Activated CD8-positive, alpha-beta T cell treated with anti-CD3 and anti-CD28 coated beads, Interleukin-2, amount 10 ng/mL, durations not matched to agents 7 days and 5 days (primary cell): ENCODE measurements at regions of chr2 and their contacts with region 1.

Region 1: GRCh38 chr2:100381240-100381639 is 36.2 kb downstream of the CHST10 start:
- DNase-seq: peak; percentile 84
- ATAC-seq: peak; percentile 60
- H3K4me3 Mint-ChIP-seq: no peak overlapping the region
- H3K27ac Mint-ChIP-seq: no peak overlapping the region
- H3K4me1 Mint-ChIP-seq: peaks cover 3% of the 10 kb centered on the region
- H3K27me3 Mint-ChIP-seq: no peaks in the 10 kb centered on the region

Region 2: DNA sequence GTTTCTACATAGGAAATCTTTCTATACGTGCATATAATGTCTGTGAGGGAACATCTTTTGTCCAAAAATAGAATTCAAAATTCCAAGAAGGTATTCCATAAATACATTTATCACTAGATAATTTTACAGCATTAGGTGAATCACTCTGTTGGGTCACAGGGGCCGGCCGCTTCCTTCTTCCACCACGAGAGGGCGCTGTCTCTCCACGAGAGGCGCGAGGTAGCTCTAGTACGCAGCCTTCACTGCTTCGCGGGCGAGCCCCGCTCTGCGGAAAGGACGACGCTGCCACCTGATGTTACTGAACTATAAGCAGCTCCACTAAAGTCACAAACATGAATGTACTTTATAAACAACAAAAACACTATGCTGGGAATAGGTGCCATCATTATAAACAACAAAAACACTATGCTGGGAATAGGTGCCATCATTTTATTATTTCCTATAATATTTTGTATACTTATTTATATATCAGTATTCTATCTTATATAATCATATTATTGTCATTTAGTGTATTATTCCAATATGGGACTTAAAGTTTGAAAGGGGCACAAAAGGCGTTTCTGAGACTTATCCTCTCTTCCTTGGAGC is 822.1 kb before region 1 on chr2:
- CTCF ChIA-PET with region 1: interaction called, 12 read pairs
- POLR2A ChIA-PET with region 1: no interaction called
- DNase-seq: peak; percentile 88
- ATAC-seq: peak; percentile 98
- H3K4me3 Mint-ChIP-seq: no peak overlapping the region
- H3K27ac Mint-ChIP-seq: no peak overlapping the region
- H3K4me1 Mint-ChIP-seq: peaks cover 2% of the 10 kb centered on the region
- H3K27me3 Mint-ChIP-seq: peaks cover 11% of the 10 kb centered on the region

Region 3: DNA sequence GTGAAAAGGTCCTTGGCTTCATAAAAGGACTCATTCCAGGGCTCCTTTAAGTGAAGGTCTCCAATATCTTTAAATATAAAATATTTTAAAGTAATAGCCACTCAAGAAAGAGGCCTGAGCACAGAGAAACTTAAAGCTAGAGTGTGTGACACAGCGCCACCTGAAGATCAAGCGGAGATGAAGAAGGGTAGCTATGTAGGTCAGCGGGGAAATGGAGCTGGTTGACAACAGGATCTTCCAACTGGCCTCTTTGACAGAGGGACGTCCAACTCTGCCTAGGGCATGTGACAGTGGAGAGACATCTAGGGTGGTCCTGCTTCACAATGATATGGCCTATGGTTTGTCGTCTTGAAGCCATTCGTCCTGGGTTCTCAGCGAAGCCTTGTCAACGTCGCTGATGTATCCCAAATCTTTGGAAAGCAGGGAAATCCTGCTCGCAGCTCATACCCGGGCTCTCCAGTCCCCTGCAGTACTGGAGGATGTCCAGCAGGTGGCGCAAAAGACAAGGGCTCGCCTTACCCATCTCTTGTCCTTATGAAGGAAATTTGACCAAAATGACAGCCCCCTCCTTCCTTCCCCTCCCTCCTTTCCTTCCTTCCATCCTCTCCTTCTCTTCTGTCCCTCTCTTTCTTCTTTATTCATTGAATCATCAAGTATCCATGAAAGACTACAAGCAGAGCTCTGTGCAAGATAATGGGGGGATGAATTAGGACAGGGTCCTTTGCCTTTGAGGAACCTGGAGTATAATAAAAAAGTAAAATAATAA is 118.5 kb before region 1 on chr2:
- CTCF ChIA-PET with region 1: interaction called, 227 read pairs
- POLR2A ChIA-PET with region 1: interaction called, 4 read pairs
- DNase-seq: peak; percentile 72
- ATAC-seq: peak; percentile 75
- H3K4me3 Mint-ChIP-seq: no peak overlapping the region
- H3K27ac Mint-ChIP-seq: no peak overlapping the region
- H3K4me1 Mint-ChIP-seq: peaks cover 2% of the 10 kb centered on the region
- H3K27me3 Mint-ChIP-seq: no peaks in the 10 kb centered on the region

Region 4: DNA sequence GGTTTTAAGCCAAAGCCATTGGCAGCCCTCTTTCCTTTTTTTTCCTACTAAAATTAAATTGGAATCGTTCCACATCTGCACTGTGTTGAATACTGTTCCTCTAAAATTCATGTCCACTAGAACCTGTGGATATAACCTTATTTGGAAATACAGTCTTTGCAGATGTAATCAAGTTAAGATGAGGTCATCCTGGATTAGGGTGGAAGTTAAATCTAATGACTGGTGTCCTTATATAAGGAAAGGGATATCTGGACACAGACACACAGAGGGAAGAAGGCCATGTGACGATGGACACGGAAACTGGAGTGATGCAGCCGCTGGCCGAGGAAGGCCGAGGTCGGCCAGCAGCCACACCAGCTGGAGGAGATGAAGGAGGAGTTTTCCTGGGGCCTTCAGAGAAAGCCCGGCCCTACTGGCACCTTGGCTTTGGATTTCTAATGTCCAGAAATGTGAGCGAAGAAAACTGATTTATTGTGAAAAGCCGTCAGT is 108.4 kb before region 1 on chr2:
- CTCF ChIA-PET with region 1: interaction called, 11 read pairs
- POLR2A ChIA-PET with region 1: no interaction called
- DNase-seq: no peak
- ATAC-seq: no peak
- H3K4me3 Mint-ChIP-seq: no peak overlapping the region
- H3K27ac Mint-ChIP-seq: no peak overlapping the region
- H3K4me1 Mint-ChIP-seq: peaks cover 11% of the 10 kb centered on the region
- H3K27me3 Mint-ChIP-seq: peaks cover 2% of the 10 kb centered on the region

Region 5: GRCh38 chr2:100291120-100291970 is 89.9 kb before region 1 on chr2:
- CTCF ChIA-PET with region 1: interaction called, 12 read pairs
- POLR2A ChIA-PET with region 1: no interaction called
- DNase-seq: peak; percentile 84
- ATAC-seq: peak; percentile 96
- H3K4me3 Mint-ChIP-seq: no peak overlapping the region
- H3K27ac Mint-ChIP-seq: no peak overlapping the region
- H3K4me1 Mint-ChIP-seq: peaks cover 11% of the 10 kb centered on the region
- H3K27me3 Mint-ChIP-seq: peaks cover 20% of the 10 kb centered on the region

Region 6: DNA sequence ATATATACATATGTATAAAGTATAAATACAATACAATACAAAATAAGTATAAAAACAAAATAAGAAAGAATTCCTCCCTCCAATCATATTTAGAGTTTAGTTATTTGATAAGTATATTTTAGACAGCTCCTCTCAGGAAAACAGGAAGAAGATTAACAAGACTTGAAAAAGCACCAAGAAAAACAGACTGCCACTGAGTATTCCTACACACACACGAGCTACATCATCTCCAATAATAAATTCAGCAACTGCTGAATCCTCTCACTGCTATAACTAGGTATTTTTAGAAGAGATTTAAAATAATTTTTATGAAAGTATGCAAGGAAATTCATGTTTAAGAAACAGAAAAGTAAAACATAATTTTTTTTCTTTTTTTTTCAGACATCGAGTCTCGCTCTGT is 71.9 kb before region 1 on chr2:
- CTCF ChIA-PET with region 1: interaction called, 10 read pairs
- POLR2A ChIA-PET with region 1: no interaction called
- DNase-seq: no peak
- ATAC-seq: no peak
- H3K4me3 Mint-ChIP-seq: no peak overlapping the region
- H3K27ac Mint-ChIP-seq: no peak overlapping the region
- H3K4me1 Mint-ChIP-seq: no peaks in the 10 kb centered on the region
- H3K27me3 Mint-ChIP-seq: peaks cover 25% of the 10 kb centered on the region

Region 7: GRCh38 chr2:100365434-100365833 is 15.8 kb before region 1 on chr2:
- CTCF ChIA-PET with region 1: interaction called, 19 read pairs
- POLR2A ChIA-PET with region 1: no interaction called
- DNase-seq: no peak
- ATAC-seq: no peak
- H3K4me3 Mint-ChIP-seq: no peak overlapping the region
- H3K27ac Mint-ChIP-seq: no peak overlapping the region
- H3K4me1 Mint-ChIP-seq: peaks cover 5% of the 10 kb centered on the region
- H3K27me3 Mint-ChIP-seq: peaks cover 8% of the 10 kb centered on the region